Adrenal gland (tissue), 19 donors: ENCODE measurements at regions of chr5 and their contacts with region 1.

Region 1: GRCh38 chr5:112757468-112758208 is 20.0 kb downstream of the APC start:
- DNase-seq: no peak
- H3K4me3 ChIP-seq: peak overlapping the region in 1 of 4 donors; percentile 40
- H3K27ac ChIP-seq: no peak overlapping the region
- H3K4me1 ChIP-seq: peaks cover 0 to 4% of the 10 kb centered on the region in 2 donors
- H3K27me3 ChIP-seq: no peaks in the 10 kb centered on the region
- CTCF ChIP-seq: peak; percentile 70 to 95 (median 86)
- POLR2A ChIP-seq: no peak

Region 2: DNA sequence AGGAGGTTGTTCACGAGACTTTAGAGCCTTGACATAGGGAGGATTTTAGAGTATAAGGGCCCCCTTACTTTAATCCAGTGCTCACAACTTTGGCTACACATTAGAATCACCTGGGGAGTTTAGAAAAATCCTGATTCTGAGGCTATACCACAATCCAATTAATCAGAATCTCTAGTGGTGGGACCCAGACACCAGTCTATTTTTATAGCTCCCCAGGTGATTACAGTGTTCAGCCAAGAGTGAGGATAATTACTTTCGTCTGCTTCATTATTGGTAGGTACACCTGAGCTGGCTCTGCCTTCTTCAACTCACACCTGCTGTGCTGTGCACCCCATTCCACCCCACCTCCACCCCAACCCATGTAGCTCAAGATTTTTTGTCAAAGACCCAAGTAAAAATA is 197.3 kb before region 1 on chr5:
- intact Hi-C with region 1: no loop called
- DNase-seq: no peak
- H3K4me3 ChIP-seq: no peak overlapping the region
- H3K27ac ChIP-seq: no peak overlapping the region
- H3K4me1 ChIP-seq: no peaks in the 10 kb centered on the region
- H3K27me3 ChIP-seq: no peaks in the 10 kb centered on the region
- CTCF ChIP-seq: no peak
- POLR2A ChIP-seq: no peak

Region 3: GRCh38 chr5:112668016-112668415 is 89.6 kb before region 1 on chr5:
- intact Hi-C with region 1: no loop called
- DNase-seq: no peak
- H3K4me3 ChIP-seq: no peak overlapping the region
- H3K27ac ChIP-seq: no peak overlapping the region
- H3K4me1 ChIP-seq: no peaks in the 10 kb centered on the region
- H3K27me3 ChIP-seq: no peaks in the 10 kb centered on the region
- CTCF ChIP-seq: no peak
- POLR2A ChIP-seq: no peak

Region 4: DNA sequence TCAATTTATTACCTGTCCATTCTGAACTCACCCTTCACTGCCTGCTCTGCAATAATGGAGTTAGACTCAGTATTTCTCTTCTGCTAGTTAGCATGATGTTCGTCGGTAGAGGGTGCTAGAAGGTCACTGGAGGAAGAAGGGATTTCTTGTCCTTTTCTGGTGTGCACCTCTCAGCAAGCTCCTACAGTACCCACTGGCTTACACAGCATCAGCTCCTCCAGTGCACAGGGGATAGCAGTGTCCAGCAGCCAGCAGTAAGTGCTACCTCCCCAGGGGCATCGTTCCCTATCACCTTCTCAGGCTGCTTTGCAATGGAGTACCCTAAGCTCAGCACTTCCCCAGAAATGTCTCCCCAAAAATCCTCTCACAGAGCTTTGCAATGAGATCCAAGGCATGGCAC is 65.9 kb before region 1 on chr5:
- intact Hi-C with region 1: loop called in 1 of 2 experiments (anchors 10 kb)
- DNase-seq: no peak
- H3K4me3 ChIP-seq: no peak overlapping the region
- H3K27ac ChIP-seq: no peak overlapping the region
- H3K4me1 ChIP-seq: peaks cover 8 to 15% of the 10 kb centered on the region in 2 donors
- H3K27me3 ChIP-seq: no peaks in the 10 kb centered on the region
- CTCF ChIP-seq: peak in 2 of 6 experiments; percentile 18 to 32
- POLR2A ChIP-seq: no peak